ENCODE measurements at regions of chr10 and their contacts with region 1.

Region 1: GRCh38 chr10:75401569-75402485 is at the start of gene ZNF503:
- DNase-seq: peak; percentile 99
- H3K4me3 ChIP-seq: peak within 1 kb of the TSS; percentile 76 to 97 (median 92)
- H3K27ac ChIP-seq: peak within 1 kb of the TSS; percentile 93 to 99 (median 98)
- H3K4me1 ChIP-seq: peaks cover 0 to 38% (median 29%) of the 10 kb centered on the region in 4 donors
- H3K27me3 ChIP-seq: no peaks in the 10 kb centered on the region
- CTCF ChIP-seq: peak; percentile 15 to 66 (median 46)
- EP300 ChIP-seq: peak in 2 of 4 donors; percentile 60 to 69
- POLR2A ChIP-seq: peak; percentile 65 to 80
- total RNA-seq, gene ZNF503: 10.0 to 20.3 (median 18.2) TPM

Region 2: GRCh38 chr10:75469006-75469616 is 67.3 kb after region 1 on chr10:
- intact Hi-C with region 1: loop called (anchors 2 kb)
- DNase-seq: peak; percentile 85
- H3K4me3 ChIP-seq: no peak overlapping the region
- H3K27ac ChIP-seq: peak overlapping the region; percentile 43 to 62 (median 54)
- H3K4me1 ChIP-seq: peaks cover 0 to 56% (median 44%) of the 10 kb centered on the region in 4 donors
- H3K27me3 ChIP-seq: no peaks in the 10 kb centered on the region
- CTCF ChIP-seq: no peak
- EP300 ChIP-seq: peak in 3 of 4 donors; percentile 32 to 72 (median 68)
- POLR2A ChIP-seq: no peak

Region 3: DNA sequence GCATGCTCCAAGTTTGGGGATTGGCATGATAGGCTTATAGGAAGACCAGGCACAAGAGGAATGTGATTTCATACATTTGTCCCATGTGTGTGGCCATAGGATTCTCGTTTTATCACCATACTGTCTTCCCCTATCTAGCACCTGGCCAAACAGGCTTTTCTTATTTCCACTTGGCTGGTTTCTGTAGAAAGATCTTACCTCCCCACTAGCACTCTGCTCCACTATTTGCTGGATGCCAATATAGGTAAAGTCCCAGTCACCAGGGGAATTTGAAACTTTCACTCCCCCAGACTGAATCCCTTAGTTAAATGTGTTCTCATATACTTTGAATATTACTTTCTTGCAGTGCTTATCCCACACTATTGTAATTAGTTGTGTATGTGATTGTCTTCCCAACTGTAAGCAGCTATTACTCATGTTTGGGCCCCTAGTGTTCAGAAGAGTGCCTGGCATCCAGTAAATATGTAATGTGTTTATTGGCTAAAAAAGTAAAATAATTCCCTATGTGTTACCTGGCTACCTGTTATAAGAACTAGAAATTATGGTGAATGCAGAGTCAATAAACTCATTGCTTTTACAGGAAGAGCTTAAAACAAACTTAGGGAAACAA is 138.6 kb after region 1 on chr10:
- intact Hi-C with region 1: no loop called
- DNase-seq: no peak
- H3K4me3 ChIP-seq: no peak overlapping the region
- H3K27ac ChIP-seq: no peak overlapping the region
- H3K4me1 ChIP-seq: peaks cover 0 to 38% (median 24%) of the 10 kb centered on the region in 4 donors
- H3K27me3 ChIP-seq: no peaks in the 10 kb centered on the region
- CTCF ChIP-seq: no peak
- EP300 ChIP-seq: no peak
- POLR2A ChIP-seq: no peak

Region 4: DNA sequence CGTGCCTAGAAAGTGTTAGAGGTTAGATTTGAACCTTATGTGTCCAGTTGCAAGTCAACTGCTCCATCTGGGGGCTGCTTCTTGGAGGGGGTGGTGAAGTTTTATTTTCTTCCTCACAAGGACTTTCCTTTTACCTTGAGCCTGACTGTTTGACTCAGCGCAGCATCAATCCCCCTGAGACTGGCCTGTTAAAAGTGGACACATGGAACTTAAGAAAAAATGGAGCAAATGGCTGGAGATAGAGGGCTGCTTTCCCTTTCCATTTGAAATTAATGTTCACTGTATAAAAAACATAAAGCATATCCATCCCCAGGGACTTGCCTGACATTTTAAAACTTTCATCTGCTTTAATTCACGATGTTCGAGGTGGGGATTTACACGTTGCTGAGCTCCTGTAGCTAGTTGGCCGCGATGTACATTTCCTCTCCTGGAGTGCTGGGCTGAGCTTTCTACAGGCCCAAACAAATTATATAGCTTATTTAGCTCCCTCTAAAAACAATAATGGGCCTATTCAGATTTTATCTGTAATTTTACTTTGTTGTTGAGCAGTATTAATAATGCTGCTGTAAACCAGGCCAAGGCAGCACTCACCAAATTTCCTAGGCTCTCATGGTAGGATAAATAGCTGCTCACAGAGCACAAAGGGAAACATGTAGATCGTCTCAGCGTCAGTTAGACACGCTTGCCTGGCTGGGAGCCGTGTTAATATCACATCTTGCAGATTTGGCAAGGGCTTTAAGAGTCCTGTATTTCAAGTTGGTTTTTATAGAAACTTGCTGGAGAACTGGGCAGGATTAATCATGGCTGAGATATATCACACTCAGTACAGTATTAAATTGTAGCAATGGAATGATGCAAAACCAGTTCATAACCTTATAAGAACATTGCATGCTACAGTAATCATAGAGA is 281.1 kb after region 1 on chr10:
- intact Hi-C with region 1: loop called (anchors 5 kb)
- DNase-seq: peak; percentile 84
- H3K4me3 ChIP-seq: no peak overlapping the region
- H3K27ac ChIP-seq: peak overlapping the region; percentile 40 to 75 (median 72)
- H3K4me1 ChIP-seq: peaks cover 0 to 36% (median 24%) of the 10 kb centered on the region in 4 donors
- H3K27me3 ChIP-seq: no peaks in the 10 kb centered on the region
- CTCF ChIP-seq: no peak
- EP300 ChIP-seq: peak in 1 of 4 donors; percentile 1
- POLR2A ChIP-seq: no peak

Region 5: DNA sequence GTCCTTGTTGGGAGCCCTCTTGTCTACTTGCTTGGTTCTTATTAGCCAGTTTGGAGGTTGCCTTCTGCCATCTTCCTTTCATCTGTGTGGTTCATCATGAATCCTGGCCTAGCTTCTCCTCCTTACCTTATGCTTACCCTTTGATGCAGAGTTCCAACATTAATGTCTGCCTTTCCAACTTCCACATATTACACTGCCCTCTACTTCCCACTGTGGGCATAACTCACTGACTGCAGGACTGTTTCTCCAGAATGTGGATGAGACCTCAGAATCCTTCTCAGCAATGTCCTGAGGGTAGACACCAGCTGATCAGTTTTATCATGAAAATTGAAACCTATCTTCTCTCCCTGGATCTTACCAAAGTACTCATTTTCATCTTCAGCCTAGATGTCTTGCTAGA is 520.6 kb after region 1 on chr10:
- intact Hi-C with region 1: loop called (anchors 5 kb)
- DNase-seq: no peak
- H3K4me3 ChIP-seq: no peak overlapping the region
- H3K27ac ChIP-seq: no peak overlapping the region
- H3K4me1 ChIP-seq: no peaks in the 10 kb centered on the region
- H3K27me3 ChIP-seq: no peaks in the 10 kb centered on the region
- CTCF ChIP-seq: no peak
- EP300 ChIP-seq: no peak
- POLR2A ChIP-seq: no peak

Region 6: DNA sequence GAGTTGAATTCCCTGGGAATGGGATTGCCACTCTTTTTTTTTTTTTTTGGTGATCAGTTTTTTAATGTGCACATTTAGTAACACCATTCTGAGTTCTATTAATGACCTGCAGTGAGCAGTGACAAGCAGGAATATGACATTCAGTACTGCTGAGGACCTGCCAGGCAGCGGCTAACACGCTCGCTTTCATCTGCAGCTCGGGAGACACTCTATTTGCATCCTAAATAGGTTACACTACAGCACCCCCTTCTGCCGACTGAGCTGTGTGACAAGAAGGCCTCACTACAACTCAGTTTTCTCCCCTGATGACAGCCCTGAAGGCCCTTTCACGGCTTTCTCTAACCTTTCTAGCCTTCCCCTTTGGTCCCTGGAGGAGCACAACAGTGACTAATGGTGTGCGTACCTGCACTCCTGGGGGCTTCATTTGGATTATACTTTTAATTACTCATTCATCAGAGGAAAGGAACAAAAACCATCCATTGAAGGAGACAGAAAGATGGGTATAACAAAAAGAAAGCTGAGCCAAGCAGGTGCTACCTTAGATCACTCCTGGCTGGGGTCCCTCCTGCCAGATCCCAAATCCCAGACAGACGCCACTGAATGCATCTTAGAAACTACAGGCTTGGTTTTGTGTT is 902.0 kb after region 1 on chr10:
- intact Hi-C with region 1: loop called (anchors 5 kb)
- DNase-seq: peak; percentile 80
- H3K4me3 ChIP-seq: no peak overlapping the region
- H3K27ac ChIP-seq: peak overlapping the region in 2 of 4 donors; percentile 39 to 44
- H3K4me1 ChIP-seq: peaks cover 0 to 28% (median 17%) of the 10 kb centered on the region in 4 donors
- H3K27me3 ChIP-seq: no peaks in the 10 kb centered on the region
- CTCF ChIP-seq: peak in 3 of 4 experiments; percentile 27 to 41 (median 28)
- EP300 ChIP-seq: no peak
- POLR2A ChIP-seq: no peak

Region 7: DNA sequence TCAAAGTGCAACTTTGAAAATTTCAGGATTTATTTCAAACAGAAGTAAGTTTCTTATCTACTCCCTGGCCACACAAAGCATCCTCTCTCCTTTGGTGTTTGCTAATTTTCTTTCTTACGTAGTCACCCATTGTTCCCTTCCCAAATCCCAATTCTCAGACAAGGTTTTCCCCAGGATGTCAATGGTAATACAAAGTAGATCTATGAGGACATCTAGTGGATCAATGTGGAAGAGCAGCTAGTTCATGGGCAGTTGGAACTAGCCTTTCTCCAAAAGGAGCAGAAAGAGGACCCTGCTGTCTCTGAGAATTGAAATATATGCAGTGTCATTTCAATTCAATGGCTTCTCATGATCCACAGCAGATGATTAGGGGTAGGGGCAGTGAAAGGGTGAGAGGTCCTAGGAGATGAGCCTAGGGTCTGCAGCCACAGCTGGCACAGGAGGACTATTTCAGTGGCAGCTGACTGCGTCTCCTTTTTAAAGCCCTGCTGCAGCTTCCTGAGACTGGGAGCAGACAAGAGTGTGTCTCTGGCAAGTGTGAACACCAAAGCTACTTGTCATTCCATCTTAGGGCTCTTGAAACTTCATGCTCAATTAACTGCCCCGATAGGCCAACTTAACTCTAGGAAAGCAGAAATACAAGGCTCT is 1603.2 kb after region 1 on chr10:
- intact Hi-C with region 1: loop called (anchors 2 kb)
- DNase-seq: no peak
- H3K4me3 ChIP-seq: no peak overlapping the region
- H3K27ac ChIP-seq: peak overlapping the region in 3 of 4 donors; percentile 50 to 57 (median 53)
- H3K4me1 ChIP-seq: peaks cover 0 to 39% (median 25%) of the 10 kb centered on the region in 4 donors
- H3K27me3 ChIP-seq: no peaks in the 10 kb centered on the region
- CTCF ChIP-seq: peak; percentile 76 to 85 (median 82)
- EP300 ChIP-seq: no peak
- POLR2A ChIP-seq: no peak

Measured in sigmoid colon (tissue), 7 donors.